Activated CD4-positive, alpha-beta T cell treated with anti-CD3 and anti-CD28 coated beads, Interleukin-2, amount 10 ng/mL, durations not matched to agents 24 days and 14 days (primary cell): ENCODE measurements at regions of chr5 and their contacts with region 1.

Region 1: GRCh38 chr5:54517174-54518092 is at the start of gene SNX18:
- DNase-seq: peak; percentile 98
- H3K4me3 Mint-ChIP-seq: peak within 1 kb of the TSS; percentile 87
- H3K27ac Mint-ChIP-seq: peak within 1 kb of the TSS; percentile 76
- H3K4me1 Mint-ChIP-seq: peaks cover 38% of the 10 kb centered on the region
- H3K27me3 Mint-ChIP-seq: peaks cover 27% of the 10 kb centered on the region
- total RNA-seq, gene SNX18: 12.9 and 13.1 TPM in 2 replicates

Region 2: DNA sequence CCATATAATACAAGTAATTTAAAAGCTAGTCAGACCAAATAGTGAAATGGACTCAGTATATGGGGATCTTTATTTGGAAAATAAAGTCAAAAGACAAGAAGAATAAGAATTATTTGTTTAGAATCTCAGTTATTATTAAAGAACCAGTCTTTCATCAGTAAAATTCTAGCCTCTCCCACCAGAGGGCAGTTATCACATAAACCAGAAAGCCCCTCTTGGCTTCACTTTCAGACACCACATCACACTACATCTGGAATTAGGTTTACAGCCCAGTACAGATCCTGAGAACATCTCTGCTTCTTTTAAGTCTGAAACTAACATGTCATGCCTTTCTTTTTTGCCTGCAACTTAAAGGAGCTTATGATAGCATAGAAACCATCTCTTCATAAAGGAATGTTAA is 74.2 kb before region 1 on chr5:
- intact Hi-C with region 1: no loop called
- DNase-seq: no peak
- H3K4me3 Mint-ChIP-seq: no peak overlapping the region
- H3K27ac Mint-ChIP-seq: no peak overlapping the region
- H3K4me1 Mint-ChIP-seq: peaks cover 20% of the 10 kb centered on the region
- H3K27me3 Mint-ChIP-seq: peaks cover 8% of the 10 kb centered on the region

Region 3: DNA sequence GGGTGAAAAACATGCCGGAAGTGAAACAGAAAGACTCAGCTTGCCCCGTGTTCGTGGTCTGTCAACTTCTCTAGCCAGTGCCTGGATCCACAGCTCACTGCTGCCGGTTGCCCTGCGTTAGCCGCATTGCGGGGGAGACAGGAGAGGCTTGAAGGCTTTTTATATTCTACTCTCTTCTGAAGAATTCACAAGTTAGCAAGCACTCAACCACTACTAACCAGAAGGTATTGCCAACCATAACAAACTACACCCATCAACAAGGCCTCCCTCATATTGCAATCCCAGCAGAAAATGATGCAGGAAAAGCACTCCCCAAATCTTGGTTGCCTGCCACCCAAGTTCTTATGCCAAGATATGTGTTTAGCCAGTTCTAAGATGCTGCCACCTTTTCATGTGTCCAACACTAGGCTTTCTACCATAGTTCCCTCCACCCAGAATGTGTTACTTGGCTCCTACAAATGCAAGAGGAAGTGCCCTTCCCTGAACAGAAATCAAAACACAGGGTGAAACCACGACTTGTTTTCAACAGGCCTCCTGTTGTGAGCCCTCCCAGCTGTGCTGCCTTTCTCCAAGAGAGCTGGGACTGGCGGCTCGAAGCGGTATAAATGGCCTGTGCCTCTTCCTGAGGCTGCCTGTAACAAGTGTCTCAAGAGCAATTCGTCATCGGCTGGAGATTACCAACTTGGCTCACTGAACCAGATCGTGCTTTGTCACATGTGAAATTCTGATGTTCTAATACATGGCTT is 129.1 kb after region 1 on chr5:
- intact Hi-C with region 1: loop called (anchors 2 kb)
- DNase-seq: peak; percentile 94
- H3K4me3 Mint-ChIP-seq: peak overlapping the region; percentile 74
- H3K27ac Mint-ChIP-seq: peak overlapping the region; percentile 87
- H3K4me1 Mint-ChIP-seq: peaks cover 50% of the 10 kb centered on the region
- H3K27me3 Mint-ChIP-seq: no peaks in the 10 kb centered on the region

Region 4: GRCh38 chr5:54793468-54794134 is 276.2 kb after region 1 on chr5:
- intact Hi-C with region 1: loop called (anchors 2 kb)
- DNase-seq: peak; percentile 66
- H3K4me3 Mint-ChIP-seq: peak overlapping the region; percentile 43
- H3K27ac Mint-ChIP-seq: peak overlapping the region; percentile 88
- H3K4me1 Mint-ChIP-seq: peaks cover 34% of the 10 kb centered on the region
- H3K27me3 Mint-ChIP-seq: peaks cover 16% of the 10 kb centered on the region

Region 5: GRCh38 chr5:54895816-54896341 is 378.4 kb after region 1 on chr5:
- intact Hi-C with region 1: loop called (anchors 2 kb)
- DNase-seq: peak; percentile 66
- H3K4me3 Mint-ChIP-seq: no peak overlapping the region
- H3K27ac Mint-ChIP-seq: no peak overlapping the region
- H3K4me1 Mint-ChIP-seq: peaks cover 4% of the 10 kb centered on the region
- H3K27me3 Mint-ChIP-seq: peaks cover 72% of the 10 kb centered on the region

Region 6: DNA sequence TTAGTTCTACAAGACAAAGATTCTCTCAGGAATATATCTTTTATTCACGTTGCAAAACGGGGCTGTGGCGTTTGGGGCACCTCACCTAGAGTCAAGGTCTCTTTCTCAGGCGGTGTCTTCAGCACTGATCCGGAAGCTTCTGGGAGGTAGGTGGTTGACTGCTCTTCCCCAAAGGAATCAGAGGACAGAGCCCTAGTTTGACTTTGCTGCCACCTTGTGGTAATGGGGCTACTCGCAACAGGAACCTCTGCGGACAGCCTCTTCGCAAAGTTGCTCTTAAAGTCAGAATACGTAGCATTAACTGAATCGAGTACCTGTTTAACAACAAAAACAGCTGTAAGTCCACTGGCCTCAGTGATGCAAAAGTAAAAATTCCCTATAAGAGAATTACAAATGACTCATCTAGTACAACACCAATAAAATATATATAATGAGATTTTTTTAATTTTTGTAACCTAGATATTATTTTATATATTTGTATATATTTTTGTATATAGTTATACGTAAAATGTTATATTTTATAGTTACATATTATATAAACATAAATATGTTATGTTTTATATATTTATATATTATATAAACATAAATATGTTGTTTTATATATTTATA is 629.2 kb after region 1 on chr5:
- intact Hi-C with region 1: loop called (anchors 10 kb)
- DNase-seq: peak; percentile 96
- H3K4me3 Mint-ChIP-seq: peak overlapping the region; percentile 53
- H3K27ac Mint-ChIP-seq: peak overlapping the region; percentile 62
- H3K4me1 Mint-ChIP-seq: peaks cover 32% of the 10 kb centered on the region
- H3K27me3 Mint-ChIP-seq: peaks cover 46% of the 10 kb centered on the region